ENCODE measurements at regions of chr1 and their contacts with region 1.

Region 1: DNA sequence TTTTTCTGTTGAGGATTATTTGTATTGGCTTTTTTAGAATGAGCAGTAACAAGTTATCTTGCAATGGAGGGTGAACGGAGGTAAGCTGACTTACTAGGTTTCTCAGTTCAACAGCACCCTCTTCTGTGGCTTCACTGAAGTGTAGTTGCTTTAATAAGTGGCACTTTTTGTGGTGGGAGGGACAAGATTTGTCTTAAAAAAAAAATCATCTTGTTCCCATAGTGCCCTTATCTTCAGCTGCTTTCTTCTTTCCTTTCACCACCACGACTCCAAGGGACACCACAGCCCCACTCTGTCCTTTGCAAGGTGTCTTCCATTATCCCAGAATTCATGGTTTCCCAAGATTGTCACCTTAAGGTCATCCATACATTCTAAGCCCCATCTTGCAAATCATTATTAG is 92.9 kb downstream of the PIGK start:
- DNase-seq: peak in 25 of 42 donors; percentile 10 to 75 (median 40)

Region 2: GRCh38 chr1:76154206-76154956 is 971.9 kb before region 1 on chr1:
- intact Hi-C with region 1: loop called (anchors 10 kb)
- DNase-seq: peak; percentile 60 to 94 (median 84)

Region 3: DNA sequence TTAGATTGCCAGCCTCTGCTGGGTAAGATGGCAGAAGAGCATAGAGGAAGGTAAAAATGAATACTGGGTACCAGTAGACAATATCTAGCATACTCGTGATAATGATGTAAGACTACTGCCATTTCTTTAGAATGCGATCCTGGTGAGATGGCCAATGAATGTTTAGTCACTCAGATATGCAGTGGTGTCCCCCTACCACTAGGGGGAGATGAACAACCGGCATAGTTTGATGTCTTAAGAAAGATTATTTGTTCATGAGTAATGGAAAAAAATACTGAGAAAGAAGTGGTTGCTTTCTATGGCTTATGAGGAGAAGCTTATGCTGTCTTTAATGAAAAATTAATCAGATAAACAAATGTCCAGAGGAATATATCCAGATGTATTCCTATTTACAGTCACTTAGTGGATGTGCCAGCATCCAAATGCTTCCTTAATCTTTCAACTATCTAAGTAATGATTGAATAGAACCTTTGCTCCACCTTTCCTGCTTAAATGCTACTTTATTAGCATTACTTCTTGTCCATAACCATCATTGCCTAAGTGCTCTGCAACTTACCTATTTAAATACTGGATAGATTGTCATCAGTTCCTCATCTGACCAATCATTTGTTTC is 795.2 kb before region 1 on chr1:
- intact Hi-C with region 1: loop called (anchors 10 kb)
- DNase-seq: peak in 36 of 42 donors; percentile 17 to 82 (median 53)

Region 4: GRCh38 chr1:77031106-77031662 is 95.1 kb before region 1 on chr1:
- intact Hi-C with region 1: no loop called
- DNase-seq: no peak

Measured in head of caudate nucleus (tissue), 42 donors.